ENCODE measurements at regions of chr9 and their contacts with region 1.

Region 1: DNA sequence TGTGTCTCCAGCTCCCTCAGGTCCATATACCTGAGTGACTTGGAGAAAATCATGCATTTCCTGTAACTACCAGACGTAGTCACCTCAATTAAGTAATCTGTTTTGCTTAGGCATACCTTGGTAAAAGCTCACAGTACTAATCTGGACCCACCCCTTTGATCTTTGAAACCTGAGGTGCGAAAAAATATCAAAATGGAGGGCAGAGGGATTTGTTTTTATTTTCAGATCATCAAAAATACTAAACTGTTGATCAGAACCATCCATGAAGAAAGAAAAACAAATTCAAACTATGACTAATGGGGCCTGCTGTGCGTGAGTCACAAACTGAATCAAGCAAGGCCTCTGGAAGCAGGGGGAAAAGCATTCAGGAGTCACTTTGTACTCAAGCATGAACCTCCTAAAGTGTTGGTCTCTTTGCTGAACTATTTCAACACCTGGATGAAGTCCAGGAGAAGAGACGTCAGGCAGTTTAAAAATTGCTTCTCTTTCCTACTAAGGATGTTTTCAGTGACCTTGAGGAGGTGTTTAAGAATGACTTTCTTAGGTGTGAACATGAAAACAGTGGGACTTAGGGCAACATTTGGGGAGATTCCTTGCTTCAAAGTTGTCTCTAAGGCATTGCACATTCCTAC is 76.3 kb downstream of the MUSK start:
- DNase-seq: peak; percentile 23 to 86
- H3K4me3 ChIP-seq: no peak overlapping the region
- H3K27ac ChIP-seq: peak overlapping the region; percentile 92 to 93
- H3K4me1 ChIP-seq: peaks cover 5 to 55% of the 10 kb centered on the region in 2 donors
- H3K27me3 ChIP-seq: no peaks in the 10 kb centered on the region
- CTCF ChIP-seq: no peak

Region 2: DNA sequence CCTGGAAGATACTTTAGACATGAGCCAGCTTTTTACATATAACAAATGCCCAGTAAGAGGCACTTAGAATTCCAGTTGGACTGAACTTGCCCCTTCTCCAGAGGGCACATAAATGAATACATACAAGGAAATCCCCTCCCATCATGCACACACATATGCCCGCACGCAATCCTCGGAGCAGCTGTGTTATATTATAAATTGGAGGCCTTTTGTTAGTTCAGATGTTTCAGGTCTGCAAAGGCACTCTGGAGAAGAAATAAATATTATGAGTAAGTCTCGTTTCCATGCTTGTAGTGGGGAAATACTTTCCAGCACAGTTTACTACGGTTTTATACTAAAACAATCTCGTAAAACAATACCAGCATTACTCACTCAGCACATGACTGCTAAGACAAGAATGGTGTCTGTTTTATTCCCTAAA is 93.9 kb before region 1 on chr9:
- intact Hi-C with region 1: loop called (anchors 5 kb)
- DNase-seq: peak in 1 of 2 donors; percentile 77
- H3K4me3 ChIP-seq: no peak overlapping the region
- H3K27ac ChIP-seq: peak overlapping the region; percentile 64 to 65
- H3K4me1 ChIP-seq: peaks cover 0 to 13% of the 10 kb centered on the region in 2 donors
- H3K27me3 ChIP-seq: no peaks in the 10 kb centered on the region
- CTCF ChIP-seq: no peak

Region 3: DNA sequence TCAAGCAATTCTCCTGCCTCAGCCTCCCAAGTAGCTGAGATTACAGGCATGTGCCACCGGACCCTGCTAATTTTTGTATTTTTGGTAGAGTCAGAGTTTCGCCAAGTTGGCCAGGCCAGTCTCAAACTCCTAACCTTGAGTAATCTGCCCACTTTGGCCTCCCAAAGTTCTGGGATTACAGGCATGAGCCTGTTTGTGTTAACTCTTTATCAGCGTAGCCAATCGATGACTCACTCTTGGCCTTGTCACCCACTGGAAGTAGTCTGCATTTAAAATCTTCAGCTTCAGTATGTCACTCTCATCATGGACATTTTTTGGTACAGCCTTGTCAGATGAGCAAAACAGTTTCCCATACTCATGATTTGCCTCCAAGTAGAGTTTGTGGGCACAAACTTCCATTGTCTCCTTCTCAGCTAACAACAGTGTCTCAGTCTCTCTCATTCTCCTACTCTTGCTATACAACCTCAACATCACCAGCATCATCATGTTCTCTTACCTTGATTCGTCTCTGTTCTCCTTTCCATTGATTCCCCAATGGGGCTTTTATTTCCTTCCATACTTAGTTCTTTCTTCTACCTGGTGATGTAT is 53.8 kb before region 1 on chr9:
- intact Hi-C with region 1: loop called (anchors 5 kb)
- DNase-seq: no peak
- H3K4me3 ChIP-seq: no peak overlapping the region
- H3K27ac ChIP-seq: no peak overlapping the region
- H3K4me1 ChIP-seq: no peaks in the 10 kb centered on the region
- H3K27me3 ChIP-seq: no peaks in the 10 kb centered on the region
- CTCF ChIP-seq: no peak

Region 4: GRCh38 chr9:110864021-110864420 is 119.2 kb after region 1 on chr9:
- intact Hi-C with region 1: loop called (anchors 1 kb)
- DNase-seq: no peak
- H3K4me3 ChIP-seq: no peak overlapping the region
- H3K27ac ChIP-seq: peak overlapping the region; percentile 60 to 87
- H3K4me1 ChIP-seq: peaks cover 4 to 13% of the 10 kb centered on the region in 2 donors
- H3K27me3 ChIP-seq: no peaks in the 10 kb centered on the region
- CTCF ChIP-seq: no peak

Region 5: DNA sequence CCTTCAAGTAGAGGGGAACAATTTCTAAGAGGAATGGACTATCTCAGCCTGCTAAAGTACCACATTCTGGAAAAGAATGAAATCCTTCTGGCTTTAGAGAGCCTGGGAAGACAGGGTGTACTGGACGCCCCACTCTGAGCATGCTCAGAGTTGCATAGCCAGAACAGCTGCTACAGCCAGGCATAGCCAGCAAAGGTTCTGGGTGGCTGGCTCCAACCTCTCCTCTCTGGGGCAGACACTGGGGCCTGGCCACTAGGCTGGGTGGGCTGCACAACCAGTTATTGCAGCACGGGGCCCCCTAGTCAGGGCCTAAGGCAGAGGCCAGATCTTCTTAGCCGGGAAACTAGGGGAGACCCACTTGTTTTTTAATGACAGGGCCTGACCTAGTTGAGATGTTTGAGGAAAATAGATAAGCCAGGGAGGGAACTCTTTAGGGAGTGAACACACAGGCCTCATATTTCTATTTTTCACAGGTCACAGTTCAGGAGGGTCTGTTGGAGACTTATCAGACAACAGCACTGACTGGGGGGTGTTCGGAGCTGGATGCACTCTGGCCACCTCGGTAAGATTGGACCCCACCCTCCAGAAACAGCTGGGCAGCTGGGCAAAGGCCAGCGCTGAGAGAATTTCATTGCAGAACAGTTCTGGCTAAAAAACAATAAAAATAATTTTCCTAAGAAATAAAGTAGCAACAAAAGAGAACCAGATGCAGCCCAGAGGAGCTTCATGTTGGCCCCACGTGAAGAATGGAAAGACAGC is 150.5 kb after region 1 on chr9:
- intact Hi-C with region 1: loop called (anchors 5 kb)
- DNase-seq: no peak
- H3K4me3 ChIP-seq: no peak overlapping the region
- H3K27ac ChIP-seq: peak overlapping the region; percentile 81 to 87
- H3K4me1 ChIP-seq: peaks cover 11 to 51% of the 10 kb centered on the region in 2 donors
- H3K27me3 ChIP-seq: no peaks in the 10 kb centered on the region
- CTCF ChIP-seq: no peak

Region 6: GRCh38 chr9:111037381-111038305 is 292.8 kb after region 1 on chr9:
- intact Hi-C with region 1: loop called (anchors 2 kb)
- DNase-seq: peak in 1 of 2 donors; percentile 65
- H3K4me3 ChIP-seq: peak overlapping the region; percentile 73 to 81
- H3K27ac ChIP-seq: peak overlapping the region; percentile 92 to 95
- H3K4me1 ChIP-seq: peaks cover 0 to 16% of the 10 kb centered on the region in 2 donors
- H3K27me3 ChIP-seq: no peaks in the 10 kb centered on the region
- CTCF ChIP-seq: peak in 2 of 3 experiments; percentile 5 to 19

Region 7: GRCh38 chr9:111298731-111299598 is 554.1 kb after region 1 on chr9:
- intact Hi-C with region 1: loop called (anchors 5 kb)
- DNase-seq: peak in 1 of 2 donors; percentile 73
- H3K4me3 ChIP-seq: peak overlapping the region in 1 of 2 donors; percentile 50
- H3K27ac ChIP-seq: peak overlapping the region; percentile 49 to 78
- H3K4me1 ChIP-seq: peaks cover 0 to 4% of the 10 kb centered on the region in 2 donors
- H3K27me3 ChIP-seq: no peaks in the 10 kb centered on the region
- CTCF ChIP-seq: peak; percentile 70 to 75 (median 73)

Measured in ascending aorta (tissue), 2 donors.